Activated naive CD4-positive, alpha-beta T cell treated with anti-CD3 and anti-CD28 coated beads for 36 hours (primary cell): ENCODE measurements at regions of chr10 and their contacts with region 1.

Region 1: DNA sequence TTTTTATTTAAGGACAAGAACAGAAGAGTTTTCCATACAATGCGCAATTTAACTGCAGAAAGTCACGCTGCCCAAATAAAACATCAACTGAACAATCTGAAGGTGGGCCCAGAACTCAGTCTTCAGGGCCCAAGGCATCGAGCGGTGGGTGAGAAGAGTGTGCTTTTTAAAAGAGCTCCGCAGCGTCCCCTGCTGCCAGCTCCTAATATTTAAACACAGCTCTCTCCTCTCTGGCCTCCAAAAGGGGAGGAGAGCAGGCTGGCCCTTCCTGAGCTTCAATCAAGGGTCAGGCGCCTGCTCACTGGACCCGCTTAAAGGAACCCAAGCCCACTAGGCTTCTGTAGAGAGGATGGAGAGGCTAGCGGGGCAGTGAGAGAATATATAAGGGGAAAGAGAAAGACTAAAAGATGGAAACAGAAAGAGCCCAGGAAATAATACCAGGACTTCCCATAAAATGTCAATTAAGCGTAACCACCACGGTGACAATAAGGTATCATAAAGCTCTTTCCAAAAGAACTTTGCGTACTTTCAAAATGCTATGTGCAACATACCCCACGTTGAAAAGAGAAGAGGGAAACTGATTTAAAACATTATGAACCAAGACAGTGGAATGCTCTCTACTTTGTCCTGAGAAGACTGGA is 2.8 kb downstream of the FAM53B start:
- DNase-seq: peak; percentile 84
- H3K4me3 Mint-ChIP-seq: peak overlapping the region; percentile 52
- H3K27ac Mint-ChIP-seq: peak overlapping the region; percentile 68
- H3K4me1 Mint-ChIP-seq: peaks cover 68% of the 10 kb centered on the region
- H3K27me3 Mint-ChIP-seq: peaks cover 2% of the 10 kb centered on the region

Region 2: GRCh38 chr10:123994417-123995081 is 746.9 kb before region 1 on chr10:
- CTCF ChIA-PET with region 1: no interaction called
- intact Hi-C with region 1: loop called (anchors 5 kb)
- DNase-seq: peak; percentile 83
- H3K4me3 Mint-ChIP-seq: no peak overlapping the region
- H3K27ac Mint-ChIP-seq: no peak overlapping the region
- H3K4me1 Mint-ChIP-seq: peaks cover 11% of the 10 kb centered on the region
- H3K27me3 Mint-ChIP-seq: peaks cover 52% of the 10 kb centered on the region

Region 3: GRCh38 chr10:124539935-124540641 is 201.3 kb before region 1 on chr10:
- CTCF ChIA-PET with region 1: interaction called, 43 read pairs
- intact Hi-C with region 1: loop called (anchors 1 kb)
- DNase-seq: peak; percentile 71
- H3K4me3 Mint-ChIP-seq: no peak overlapping the region
- H3K27ac Mint-ChIP-seq: no peak overlapping the region
- H3K4me1 Mint-ChIP-seq: peaks cover 11% of the 10 kb centered on the region
- H3K27me3 Mint-ChIP-seq: no peaks in the 10 kb centered on the region

Region 4: GRCh38 chr10:124589491-124590041 is 151.8 kb before region 1 on chr10:
- CTCF ChIA-PET with region 1: no interaction called
- intact Hi-C with region 1: no loop called
- DNase-seq: no peak
- H3K4me3 Mint-ChIP-seq: no peak overlapping the region
- H3K27ac Mint-ChIP-seq: no peak overlapping the region
- H3K4me1 Mint-ChIP-seq: no peaks in the 10 kb centered on the region
- H3K27me3 Mint-ChIP-seq: no peaks in the 10 kb centered on the region

Region 5: GRCh38 chr10:124647421-124648130 is 93.8 kb before region 1 on chr10:
- CTCF ChIA-PET with region 1: interaction called, 30 read pairs
- intact Hi-C with region 1: loop called (anchors 1 kb)
- DNase-seq: peak; percentile 88
- H3K4me3 Mint-ChIP-seq: peak overlapping the region; percentile 49
- H3K27ac Mint-ChIP-seq: peak overlapping the region; percentile 73
- H3K4me1 Mint-ChIP-seq: peaks cover 69% of the 10 kb centered on the region
- H3K27me3 Mint-ChIP-seq: no peaks in the 10 kb centered on the region

Region 6: GRCh38 chr10:124697830-124698544 is 43.4 kb before region 1 on chr10:
- CTCF ChIA-PET with region 1: interaction called, 18 read pairs
- intact Hi-C with region 1: loop called (anchors 1 kb)
- DNase-seq: peak; percentile 73
- H3K4me3 Mint-ChIP-seq: no peak overlapping the region
- H3K27ac Mint-ChIP-seq: peak overlapping the region; percentile 89
- H3K4me1 Mint-ChIP-seq: peaks cover 87% of the 10 kb centered on the region
- H3K27me3 Mint-ChIP-seq: no peaks in the 10 kb centered on the region

Region 7: DNA sequence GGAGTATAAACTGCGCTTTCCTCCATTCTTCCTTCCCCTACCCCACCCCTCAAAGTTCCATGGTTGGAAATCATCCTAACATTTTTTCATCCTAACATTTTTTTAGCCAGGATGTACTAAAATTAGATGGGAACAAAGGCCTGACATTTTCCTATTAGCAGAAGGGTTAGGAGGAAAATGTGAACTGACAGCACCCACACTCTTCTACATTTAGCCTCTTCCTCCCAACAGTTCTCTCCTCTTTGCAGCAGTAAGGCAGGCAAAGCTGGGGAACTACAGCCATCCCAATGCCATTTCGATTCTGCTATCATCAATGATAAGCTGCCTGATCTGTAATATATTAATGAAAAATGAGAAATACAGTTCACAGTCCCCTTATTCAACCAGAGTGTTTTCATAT is 14.2 kb after region 1 on chr10:
- CTCF ChIA-PET with region 1: interaction called, 19 read pairs
- intact Hi-C with region 1: no loop called
- DNase-seq: no peak
- H3K4me3 Mint-ChIP-seq: no peak overlapping the region
- H3K27ac Mint-ChIP-seq: no peak overlapping the region
- H3K4me1 Mint-ChIP-seq: no peaks in the 10 kb centered on the region
- H3K27me3 Mint-ChIP-seq: no peaks in the 10 kb centered on the region

Region 8: DNA sequence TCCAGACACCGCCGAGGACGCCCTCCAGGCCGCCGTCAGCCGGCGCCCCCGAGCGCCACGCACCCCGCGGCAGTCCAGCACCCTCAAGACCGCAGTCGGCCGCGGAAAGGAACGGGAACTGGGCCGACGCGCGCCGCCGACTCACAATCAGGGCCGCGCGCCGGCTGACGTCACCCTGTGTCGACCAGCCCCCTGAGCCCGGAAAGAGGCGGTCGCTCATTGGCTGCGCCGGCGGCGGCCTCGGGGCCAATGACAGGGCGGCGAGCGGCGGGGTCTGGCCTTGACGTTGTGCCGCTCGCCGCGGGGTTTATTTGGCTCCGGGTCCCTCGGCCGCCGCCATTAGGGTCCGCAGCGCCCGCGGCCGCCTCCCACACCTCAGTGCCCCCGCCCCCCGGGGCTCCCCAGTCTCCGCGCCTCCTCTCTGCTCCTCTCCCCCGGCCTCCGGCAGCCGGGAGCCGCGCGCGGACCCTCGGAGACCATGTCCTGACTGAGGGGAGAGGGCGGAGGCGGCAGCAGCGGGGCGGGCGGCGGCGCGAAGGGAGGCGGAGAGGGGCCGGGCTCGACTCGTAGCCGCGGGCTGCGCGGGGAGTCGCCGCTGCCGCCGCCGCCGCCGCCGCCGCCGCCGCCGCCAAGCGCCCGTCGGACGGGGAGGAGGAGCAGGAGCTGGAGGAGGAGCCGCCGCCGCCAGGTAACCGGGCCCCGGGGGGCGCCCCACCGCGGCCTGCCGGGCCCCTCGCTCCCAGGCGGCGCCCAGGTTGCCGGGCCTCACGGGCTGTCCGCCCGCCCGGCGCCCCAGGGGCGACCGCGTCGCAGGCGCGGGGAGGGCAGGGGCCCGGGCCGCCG is 175.4 kb after region 1 on chr10:
- CTCF ChIA-PET with region 1: no interaction called
- intact Hi-C with region 1: loop called (anchors 2 kb)
- DNase-seq: peak; percentile 97
- H3K4me3 Mint-ChIP-seq: peak overlapping the region; percentile 83
- H3K27ac Mint-ChIP-seq: peak overlapping the region; percentile 85
- H3K4me1 Mint-ChIP-seq: peaks cover 36% of the 10 kb centered on the region
- H3K27me3 Mint-ChIP-seq: no peaks in the 10 kb centered on the region

Region 9: DNA sequence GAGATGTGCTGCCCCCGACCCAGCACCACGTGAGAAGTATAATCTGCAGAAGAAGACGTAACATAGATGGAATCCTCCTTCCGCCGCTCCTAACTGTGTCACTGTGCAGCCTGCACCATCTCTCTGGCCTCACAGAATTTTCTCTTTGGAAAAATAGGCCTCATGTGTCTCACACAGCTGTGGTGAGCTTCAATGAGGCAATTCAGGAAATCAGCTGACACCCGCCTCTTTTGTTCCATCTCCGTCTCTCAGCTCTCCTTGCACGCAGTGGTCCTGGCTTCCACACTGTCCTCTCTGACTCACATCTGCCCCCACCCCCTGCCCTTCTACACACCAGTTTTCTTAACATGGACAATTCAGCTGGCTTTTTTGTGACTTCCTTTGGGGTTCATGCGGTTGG is 1921.9 kb after region 1 on chr10:
- CTCF ChIA-PET with region 1: no interaction called
- intact Hi-C with region 1: no loop called
- DNase-seq: no peak
- H3K4me3 Mint-ChIP-seq: no peak overlapping the region
- H3K27ac Mint-ChIP-seq: no peak overlapping the region
- H3K4me1 Mint-ChIP-seq: no peaks in the 10 kb centered on the region
- H3K27me3 Mint-ChIP-seq: peaks cover 8% of the 10 kb centered on the region